Head of caudate nucleus (tissue), 42 donors: ENCODE measurements at regions of chr5 and their contacts with region 1.

Region 1: GRCh38 chr5:111550279-111551020 is 38.1 kb upstream of the STARD4 start:
- DNase-seq: peak in 41 of 42 donors; percentile 11 to 92 (median 73)

Region 2: GRCh38 chr5:111530298-111530740 is 20.1 kb before region 1 on chr5:
- intact Hi-C with region 1: no loop called
- DNase-seq: peak in 18 of 42 donors; percentile 4 to 58 (median 24)

Region 3: DNA sequence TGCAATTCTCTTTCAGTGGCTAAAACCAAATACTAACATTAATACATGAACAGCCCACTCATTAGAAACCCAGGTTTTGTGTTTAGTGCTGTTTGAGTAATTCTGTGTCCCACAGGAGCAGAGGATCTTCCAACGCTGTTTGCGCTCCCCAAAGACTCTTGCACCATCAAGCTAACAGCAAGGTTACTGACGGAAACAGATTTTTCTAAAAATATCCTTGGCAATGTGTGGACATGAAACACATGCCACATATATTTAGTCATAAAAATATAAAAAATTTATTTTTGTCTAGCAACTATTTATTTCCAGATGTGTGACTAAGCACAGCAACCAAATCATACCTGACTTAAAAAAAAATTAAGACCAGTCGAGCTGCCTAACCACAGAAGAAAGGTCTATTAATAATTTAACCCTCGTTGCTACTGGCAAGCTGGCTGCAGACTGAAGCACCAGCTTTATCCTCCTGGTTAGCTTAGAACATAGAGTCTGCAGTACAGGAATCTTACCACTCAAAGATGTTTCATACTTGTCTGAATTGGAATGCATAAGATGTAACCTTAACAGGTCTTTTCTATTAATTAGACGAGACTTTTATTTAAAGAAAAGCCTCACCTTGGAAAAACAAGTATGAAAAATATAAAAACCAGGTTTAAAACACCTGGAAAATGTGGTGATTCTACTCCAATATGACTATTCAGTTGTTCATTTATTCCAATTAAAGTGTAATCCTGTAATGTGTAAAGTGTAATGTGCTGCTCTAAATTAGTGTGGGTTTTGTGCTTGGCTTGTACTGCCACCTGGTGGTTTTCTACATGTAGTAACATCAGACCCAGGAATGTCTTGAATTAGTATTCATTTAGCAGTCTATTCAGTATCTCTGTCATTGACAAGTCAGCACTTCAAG is 596.1 kb after region 1 on chr5:
- intact Hi-C with region 1: loop called (anchors 5 kb)
- DNase-seq: peak in 38 of 42 donors; percentile 30 to 84 (median 68)